GM23248 (cell line): ENCODE measurements at regions of chr20 and their contacts with region 1.

Region 1: DNA sequence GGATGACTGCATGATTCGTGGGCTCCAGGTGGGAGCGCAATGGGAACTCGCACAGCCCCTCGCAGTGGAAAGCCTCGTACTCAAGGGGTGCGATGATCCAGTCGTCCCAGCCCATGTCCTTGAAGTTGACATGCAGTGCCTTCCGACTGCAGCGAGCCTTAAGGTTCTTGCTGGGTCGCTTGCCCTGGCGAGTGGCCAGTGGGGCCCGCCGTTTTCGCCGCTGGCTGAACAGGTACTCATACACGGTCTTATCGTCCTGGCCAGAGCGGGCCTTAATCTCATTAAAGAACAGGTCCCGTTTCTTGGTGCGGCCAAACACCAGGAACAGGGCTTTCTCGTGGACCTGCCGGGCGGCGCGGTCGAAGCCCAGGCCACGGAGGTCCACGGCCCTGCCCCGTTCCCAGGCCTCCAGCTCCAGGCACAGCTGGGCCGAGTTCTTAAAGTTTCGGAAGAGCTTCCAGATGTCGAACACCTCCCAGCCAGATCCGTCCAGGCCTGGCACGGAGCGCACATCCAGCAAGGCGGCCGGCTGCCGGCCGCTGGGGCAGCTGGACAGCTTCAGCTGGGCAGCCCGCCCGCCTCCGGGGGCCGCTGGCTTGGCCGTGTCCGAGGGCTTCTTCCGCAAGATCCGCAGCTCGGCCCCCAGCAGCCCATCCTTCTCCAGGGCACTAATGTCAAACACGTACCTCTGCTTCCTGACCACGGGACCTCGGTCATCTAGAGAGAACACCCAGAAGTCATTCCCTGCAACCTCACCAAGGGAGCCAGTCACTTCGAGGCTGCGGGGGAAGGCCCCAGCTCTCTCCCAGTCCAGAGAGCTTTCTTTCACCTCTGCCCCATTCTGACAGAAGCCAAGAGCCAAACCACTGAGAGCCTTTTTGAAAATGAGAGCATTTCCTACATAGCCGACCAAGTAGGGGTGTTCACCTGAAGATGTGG is 3.7 kb downstream of the GDF5 start:
- DNase-seq: peak; percentile 14
- H3K4me3 ChIP-seq: no peak overlapping the region
- H3K27ac ChIP-seq: no peak overlapping the region
- H3K4me1 ChIP-seq: peaks cover 12% of the 10 kb centered on the region
- H3K27me3 ChIP-seq: no peaks in the 10 kb centered on the region

Region 2: DNA sequence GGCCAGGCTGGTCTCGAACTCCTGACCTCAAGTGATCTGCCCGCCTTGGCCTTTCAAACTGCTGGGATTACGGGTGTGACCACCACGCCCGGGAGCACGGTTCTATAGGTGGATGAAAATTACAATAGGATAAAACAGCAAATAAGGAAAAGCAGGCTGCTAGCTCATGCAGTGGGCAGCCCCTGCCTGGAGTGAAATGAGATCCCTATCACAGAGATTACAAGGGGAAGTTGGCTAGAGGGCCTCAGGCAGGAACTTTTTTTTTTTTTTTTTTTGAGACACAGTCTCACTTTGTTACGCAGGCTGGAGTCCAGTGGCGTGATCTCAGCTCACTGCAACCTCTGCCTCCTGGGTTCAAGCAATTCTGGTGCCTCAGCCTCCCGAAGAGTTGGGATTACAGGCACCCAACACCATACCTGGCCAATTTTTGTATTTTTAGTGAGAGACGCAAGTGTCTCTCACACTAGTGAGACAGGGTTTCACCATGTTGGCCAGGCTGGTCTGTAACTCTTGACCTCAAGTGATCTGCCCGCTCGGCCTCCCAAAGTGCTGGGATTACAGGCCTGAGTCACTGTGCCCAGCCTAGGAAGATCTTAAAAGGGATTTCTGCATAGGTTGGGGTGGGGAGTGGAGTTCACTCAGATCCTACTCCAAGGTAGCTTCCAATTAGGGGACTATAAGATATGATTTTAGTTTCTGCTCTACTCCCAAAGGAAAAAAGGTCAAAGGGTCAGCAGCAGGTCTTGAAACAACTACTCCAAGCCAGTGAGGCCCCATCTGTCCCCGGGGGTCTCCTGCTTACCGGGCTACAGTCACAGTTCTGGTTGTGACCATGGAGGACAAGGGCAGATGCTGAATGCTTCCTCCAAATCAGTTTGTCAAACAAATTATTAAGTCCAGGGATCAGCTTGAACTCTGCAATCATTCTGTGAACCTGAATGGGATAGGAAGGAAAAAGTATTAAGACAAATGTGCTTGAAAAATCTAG is 418.8 kb before region 1 on chr20:
- in situ Hi-C with region 1: no loop called
- DNase-seq: no peak
- H3K4me3 ChIP-seq: no peak overlapping the region
- H3K27ac ChIP-seq: no peak overlapping the region
- H3K4me1 ChIP-seq: peaks cover 17% of the 10 kb centered on the region; the same call in 1 of the 2 replicates
- H3K27me3 ChIP-seq: no peaks in the 10 kb centered on the region

Region 3: DNA sequence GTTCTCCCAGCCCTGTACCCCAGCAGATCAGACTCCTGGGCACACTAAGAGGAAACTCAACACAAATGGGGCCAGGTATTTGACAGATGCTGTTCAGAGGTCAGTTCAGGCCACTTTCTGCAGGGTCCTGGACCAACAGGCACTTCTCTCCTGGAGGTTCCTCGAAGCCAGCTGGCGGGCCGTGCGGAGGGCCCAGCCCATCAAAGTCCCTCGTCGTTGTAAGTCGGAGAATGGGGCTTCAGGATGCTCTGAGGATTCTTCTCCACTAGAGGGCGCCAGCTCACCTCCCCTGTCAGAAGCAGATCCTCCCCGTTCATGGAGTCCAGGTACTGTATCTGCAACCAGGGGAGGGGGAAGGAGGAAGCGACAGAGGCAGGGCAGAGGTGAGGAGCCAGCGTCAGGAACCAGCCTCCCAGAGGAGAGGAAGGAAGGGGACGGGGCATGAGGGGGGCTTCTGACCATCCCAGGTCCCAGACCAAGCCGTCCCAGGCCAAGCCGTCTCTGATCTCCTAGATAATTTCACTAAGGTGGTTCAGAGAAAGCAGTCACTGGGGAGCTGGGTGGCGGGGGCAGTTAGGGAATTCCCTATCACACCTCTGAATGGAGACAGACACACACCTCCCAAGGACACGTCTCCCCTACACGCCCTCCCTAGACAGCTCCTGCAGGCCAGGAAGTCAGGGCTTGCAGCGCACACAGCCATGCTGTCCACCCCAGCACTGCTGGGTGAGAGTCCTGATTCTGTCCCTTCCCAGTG is 130.4 kb before region 1 on chr20:
- in situ Hi-C with region 1: loop called (anchors 5 kb)
- DNase-seq: peak; percentile 85
- H3K4me3 ChIP-seq: no peak overlapping the region
- H3K27ac ChIP-seq: 0 out of 2 replicates have a peak overlapping the region, but pooled peaks have one; percentile 95
- H3K4me1 ChIP-seq: peaks cover 68% of the 10 kb centered on the region
- H3K27me3 ChIP-seq: no peaks in the 10 kb centered on the region